ENCODE measurements at regions of chr22 and their contacts with region 1.

Region 1: GRCh38 chr22:17303840-17304779 is 65.2 kb upstream of the CECR2 start:
- DNase-seq: peak; percentile 80
- ATAC-seq: peak; percentile 92
- H3K4me3 Mint-ChIP-seq: peak overlapping the region; percentile 28
- H3K27ac Mint-ChIP-seq: peak overlapping the region; percentile 94
- H3K4me1 Mint-ChIP-seq: peaks cover 18% of the 10 kb centered on the region
- H3K27me3 Mint-ChIP-seq: no peaks in the 10 kb centered on the region

Region 2: GRCh38 chr22:17257121-17258001 is 46.7 kb before region 1 on chr22:
- CTCF ChIA-PET with region 1: no interaction called
- POLR2A ChIA-PET with region 1: no interaction called
- intact Hi-C with region 1: no loop called
- DNase-seq: no peak
- ATAC-seq: peak; percentile 13
- H3K4me3 Mint-ChIP-seq: no peak overlapping the region
- H3K27ac Mint-ChIP-seq: no peak overlapping the region
- H3K4me1 Mint-ChIP-seq: peaks cover 21% of the 10 kb centered on the region
- H3K27me3 Mint-ChIP-seq: no peaks in the 10 kb centered on the region

Region 3: DNA sequence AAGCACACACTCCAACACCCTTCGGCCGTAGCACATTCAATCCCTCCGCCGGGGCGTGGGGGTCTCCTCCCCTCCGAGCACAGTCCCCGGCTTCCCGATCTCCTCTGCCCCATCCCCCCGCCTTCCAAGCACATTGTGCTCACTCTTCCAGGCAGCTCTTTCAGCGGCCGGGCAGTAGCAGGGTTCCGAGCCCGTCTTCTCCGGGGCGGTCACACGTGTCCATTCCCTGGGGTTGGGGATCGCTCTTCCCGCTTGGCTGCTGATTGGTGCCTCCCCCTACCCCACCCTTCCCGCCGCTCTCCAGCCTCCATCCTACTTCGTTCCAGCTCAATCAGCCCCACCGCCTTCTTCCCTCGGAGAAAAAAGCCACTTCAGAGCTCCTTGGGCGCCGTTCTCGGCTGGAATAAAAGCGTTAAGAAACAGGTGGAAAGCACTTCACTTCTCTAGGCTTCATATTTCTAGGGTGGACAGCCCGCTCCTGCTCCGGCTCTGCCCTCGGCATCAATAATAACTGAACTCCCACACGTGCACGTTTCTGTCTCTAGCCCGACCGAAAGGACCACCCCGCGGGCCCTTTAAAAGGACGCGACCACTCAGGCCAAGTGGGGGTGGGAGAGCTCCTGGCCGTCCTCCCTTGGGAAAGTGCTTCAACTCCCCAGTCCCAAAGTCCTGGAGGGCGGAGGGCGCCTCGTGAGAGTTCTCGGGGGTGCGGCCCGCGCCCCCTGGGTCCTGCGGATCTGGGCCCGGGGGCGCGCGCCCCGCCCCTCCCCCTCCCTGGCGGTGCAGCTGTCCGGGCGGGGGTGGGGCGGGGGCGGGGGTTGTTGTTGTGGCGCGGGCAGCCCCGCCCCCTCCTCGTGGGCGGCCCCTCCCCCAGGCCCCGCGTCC is 64.7 kb after region 1 on chr22:
- CTCF ChIA-PET with region 1: interaction called, 3 read pairs
- POLR2A ChIA-PET with region 1: no interaction called
- intact Hi-C with region 1: loop called in 1 of 2 experiments (anchors 2 kb)
- DNase-seq: no peak
- ATAC-seq: peak; percentile 16
- H3K4me3 Mint-ChIP-seq: peak overlapping the region; percentile 22
- H3K27ac Mint-ChIP-seq: no peak overlapping the region
- H3K4me1 Mint-ChIP-seq: peaks cover 23% of the 10 kb centered on the region
- H3K27me3 Mint-ChIP-seq: peaks cover 52% of the 10 kb centered on the region